WTC11 (cell line): ENCODE measurements at regions of chr17 and their contacts with region 1.

Region 1: DNA sequence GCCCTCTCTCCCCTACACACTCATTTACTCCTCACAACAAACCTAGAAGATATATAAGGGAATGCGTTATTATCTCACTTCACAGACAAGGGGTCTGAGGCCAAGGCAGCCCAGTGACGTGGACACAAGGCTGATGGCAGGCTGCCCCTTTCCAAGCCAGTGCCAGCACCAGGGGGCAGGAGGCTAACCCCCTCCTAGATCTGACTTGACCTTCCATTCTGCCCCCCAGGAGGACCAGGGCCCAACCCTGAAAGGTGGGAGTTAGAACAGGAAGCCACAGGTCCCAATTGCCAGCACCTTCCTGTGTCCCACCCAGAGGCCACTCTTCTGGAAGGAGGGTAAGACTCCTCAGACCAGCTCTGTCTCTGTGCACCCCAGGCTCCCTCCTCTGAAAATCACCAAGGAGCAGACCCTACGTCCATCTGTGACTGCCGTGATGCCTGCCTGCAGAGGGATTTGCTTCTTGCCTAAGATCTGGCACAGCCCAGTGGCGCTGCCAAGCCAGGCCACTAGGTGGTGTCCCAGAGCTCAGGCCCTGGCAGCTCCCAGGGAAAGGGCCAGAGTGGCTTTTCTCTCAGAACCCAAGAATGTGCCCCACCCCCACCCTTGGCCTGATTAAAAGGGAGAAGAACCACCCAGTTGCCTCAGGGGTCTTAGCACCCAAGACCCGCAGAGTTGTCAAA is 42.4 kb upstream of the MRPS23 start:
- DNase-seq: peak; percentile 96
- ATAC-seq: peak; percentile 91
- H3K4me3 Mint-ChIP-seq: peak overlapping the region; percentile 10; the same call in 1 of the 2 replicates
- H3K27ac Mint-ChIP-seq: peak overlapping the region; percentile 95
- H3K4me1 Mint-ChIP-seq: peaks cover 18% of the 10 kb centered on the region
- H3K27me3 Mint-ChIP-seq: no peaks in the 10 kb centered on the region
- CTCF ChIP-seq: peak; percentile 91

Region 2: GRCh38 chr17:57839571-57839923 is 52.7 kb before region 1 on chr17:
- CTCF ChIA-PET with region 1: no interaction called
- POLR2A ChIA-PET with region 1: no interaction called
- DNase-seq: no peak
- ATAC-seq: no peak
- H3K4me3 Mint-ChIP-seq: no peak overlapping the region
- H3K27ac Mint-ChIP-seq: no peak overlapping the region
- H3K4me1 Mint-ChIP-seq: no peaks in the 10 kb centered on the region; the same call in 1 of the 2 replicates
- H3K27me3 Mint-ChIP-seq: no peaks in the 10 kb centered on the region
- CTCF ChIP-seq: no peak

Region 3: GRCh38 chr17:57861000-57861789 is 31.1 kb before region 1 on chr17:
- CTCF ChIA-PET with region 1: interaction called, 16 read pairs
- POLR2A ChIA-PET with region 1: interaction called, 5 read pairs
- DNase-seq: peak; percentile 58
- ATAC-seq: peak; percentile 34
- H3K4me3 Mint-ChIP-seq: peak overlapping the region; percentile 79
- H3K27ac Mint-ChIP-seq: no peak overlapping the region
- H3K4me1 Mint-ChIP-seq: peaks cover 55% of the 10 kb centered on the region
- H3K27me3 Mint-ChIP-seq: peaks cover 40% of the 10 kb centered on the region
- CTCF ChIP-seq: no peak

Region 4: GRCh38 chr17:57868007-57868909 is 24.0 kb before region 1 on chr17:
- CTCF ChIA-PET with region 1: interaction called, 16 read pairs
- POLR2A ChIA-PET with region 1: interaction called, 5 read pairs
- DNase-seq: peak; percentile 76
- ATAC-seq: peak; percentile 89
- H3K4me3 Mint-ChIP-seq: no peak overlapping the region
- H3K27ac Mint-ChIP-seq: 0 out of 2 replicates have a peak overlapping the region, but pooled peaks have one; percentile 53
- H3K4me1 Mint-ChIP-seq: peaks cover 47% of the 10 kb centered on the region
- H3K27me3 Mint-ChIP-seq: peaks cover 5% of the 10 kb centered on the region
- CTCF ChIP-seq: peak; percentile 23

Region 5: GRCh38 chr17:57875309-57876115 is 16.8 kb before region 1 on chr17:
- CTCF ChIA-PET with region 1: interaction called, 50 read pairs
- POLR2A ChIA-PET with region 1: interaction called, 7 read pairs
- DNase-seq: peak; percentile 69
- ATAC-seq: peak; percentile 63
- H3K4me3 Mint-ChIP-seq: peak overlapping the region; percentile 46
- H3K27ac Mint-ChIP-seq: peak overlapping the region; percentile 87
- H3K4me1 Mint-ChIP-seq: peaks cover 82% of the 10 kb centered on the region
- H3K27me3 Mint-ChIP-seq: peaks cover 10% of the 10 kb centered on the region; the same call in 1 of the 2 replicates
- CTCF ChIP-seq: no peak

Region 6: GRCh38 chr17:57881093-57881531 is 11.2 kb before region 1 on chr17:
- CTCF ChIA-PET with region 1: interaction called, 50 read pairs
- POLR2A ChIA-PET with region 1: interaction called, 7 read pairs
- DNase-seq: no peak
- ATAC-seq: peak; percentile 41
- H3K4me3 Mint-ChIP-seq: 0 out of 2 replicates have a peak overlapping the region, but pooled peaks have one; percentile 9
- H3K27ac Mint-ChIP-seq: peak overlapping the region; percentile 71; the same call in 1 of the 2 replicates
- H3K4me1 Mint-ChIP-seq: peaks cover 59% of the 10 kb centered on the region
- H3K27me3 Mint-ChIP-seq: peaks cover 6% of the 10 kb centered on the region; the same call in 1 of the 2 replicates
- CTCF ChIP-seq: no peak

Region 7: DNA sequence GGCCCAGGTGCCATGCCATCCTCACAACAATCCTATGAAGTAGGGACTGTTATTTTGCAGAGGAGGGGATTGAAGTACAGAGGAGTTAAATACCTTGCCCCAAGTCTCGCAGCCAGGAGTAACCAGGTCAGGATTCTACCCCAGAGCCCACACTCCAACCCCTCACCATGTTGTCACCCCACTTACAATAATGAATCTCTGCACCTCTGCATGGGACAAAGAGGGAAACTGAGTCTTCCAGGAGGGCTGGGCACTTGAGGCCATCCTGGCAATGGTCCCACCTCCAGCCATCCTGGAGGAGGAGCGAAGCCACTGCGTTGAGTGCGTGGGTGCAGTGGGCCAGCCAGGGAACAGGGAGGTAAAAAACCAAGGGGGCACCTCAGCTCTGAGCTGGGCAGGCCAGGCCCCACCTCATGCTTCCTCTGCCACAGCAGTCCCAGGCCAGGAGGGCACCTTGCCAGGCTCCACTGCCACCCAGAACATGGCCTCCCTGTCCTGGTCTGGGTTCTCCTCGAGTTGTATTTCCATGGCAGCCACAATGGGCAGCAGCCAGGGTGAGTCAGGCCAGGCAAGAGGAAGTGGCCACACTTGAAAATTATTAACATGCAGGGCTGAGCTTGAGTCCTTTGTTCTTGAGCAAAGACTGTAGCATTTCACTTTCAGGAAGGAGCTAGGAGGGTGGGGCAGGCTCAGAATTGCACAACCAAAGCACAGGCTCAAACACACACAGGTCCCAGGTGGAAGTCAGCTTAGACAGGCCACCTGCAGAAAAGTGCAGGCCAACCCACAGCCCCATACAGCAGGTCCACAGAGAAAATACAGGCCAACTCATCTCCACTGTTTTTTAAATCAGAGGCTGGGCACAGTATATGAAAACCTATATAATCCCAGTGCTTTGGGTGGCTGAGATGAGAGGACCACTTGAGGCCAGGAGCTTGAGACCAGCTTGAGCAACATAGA is 10.8 kb after region 1 on chr17:
- CTCF ChIA-PET with region 1: interaction called, 33 read pairs
- POLR2A ChIA-PET with region 1: interaction called, 3 read pairs
- DNase-seq: no peak
- ATAC-seq: no peak
- H3K4me3 Mint-ChIP-seq: no peak overlapping the region
- H3K27ac Mint-ChIP-seq: peak overlapping the region; percentile 71; the same call in 1 of the 2 replicates
- H3K4me1 Mint-ChIP-seq: peaks cover 59% of the 10 kb centered on the region
- H3K27me3 Mint-ChIP-seq: no peaks in the 10 kb centered on the region
- CTCF ChIP-seq: no peak

Region 8: GRCh38 chr17:58210922-58211321 is 318.6 kb after region 1 on chr17:
- CTCF ChIA-PET with region 1: no interaction called
- POLR2A ChIA-PET with region 1: no interaction called
- DNase-seq: no peak
- ATAC-seq: peak; percentile 73
- H3K4me3 Mint-ChIP-seq: no peak overlapping the region
- H3K27ac Mint-ChIP-seq: no peak overlapping the region
- H3K4me1 Mint-ChIP-seq: no peaks in the 10 kb centered on the region
- H3K27me3 Mint-ChIP-seq: no peaks in the 10 kb centered on the region
- CTCF ChIP-seq: no peak